Upper lobe of right lung (tissue), 1 donor: ENCODE measurements at regions of chr3 and their contacts with region 1.

Region 1: GRCh38 chr3:150183678-150184425 is 213.2 kb upstream of the PFN2 start:
- DNase-seq: peak; percentile 72
- ATAC-seq: peak; percentile 95
- H3K4me3 ChIP-seq: peak overlapping the region; percentile 43
- H3K27ac ChIP-seq: no peak overlapping the region
- H3K4me1 ChIP-seq: peaks cover 9% of the 10 kb centered on the region
- H3K27me3 ChIP-seq: no peaks in the 10 kb centered on the region
- CTCF ChIP-seq: peak; percentile 66

Region 2: GRCh38 chr3:149969940-149970715 is 213.7 kb before region 1 on chr3:
- intact Hi-C with region 1: loop called (anchors 10 kb)
- DNase-seq: peak; percentile 91
- ATAC-seq: peak; percentile 80
- H3K4me3 ChIP-seq: peak overlapping the region; percentile 73
- H3K27ac ChIP-seq: peak overlapping the region; percentile 64
- H3K4me1 ChIP-seq: peaks cover 16% of the 10 kb centered on the region
- H3K27me3 ChIP-seq: no peaks in the 10 kb centered on the region
- CTCF ChIP-seq: no peak

Region 3: DNA sequence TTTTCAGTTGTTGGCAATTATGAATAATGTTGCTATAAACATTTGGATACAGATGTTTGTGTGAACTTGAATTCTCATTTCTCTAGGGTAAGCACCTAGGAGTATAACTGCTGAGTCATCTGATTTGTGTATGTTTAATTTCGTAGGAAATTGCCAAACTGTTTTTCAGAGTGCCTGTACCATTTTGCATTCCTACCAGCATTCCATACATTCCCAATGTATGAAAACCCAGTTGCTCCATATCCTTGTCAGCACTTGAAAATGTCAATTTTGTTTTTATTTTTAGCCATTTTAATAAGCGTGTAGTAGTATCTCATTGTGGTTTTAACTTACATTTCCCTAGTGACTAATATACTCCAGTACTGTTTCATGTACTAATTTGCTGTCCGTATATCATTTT is 125.7 kb after region 1 on chr3:
- intact Hi-C with region 1: no loop called
- DNase-seq: no peak
- ATAC-seq: no peak
- H3K4me3 ChIP-seq: no peak overlapping the region
- H3K27ac ChIP-seq: no peak overlapping the region
- H3K4me1 ChIP-seq: no peaks in the 10 kb centered on the region
- H3K27me3 ChIP-seq: no peaks in the 10 kb centered on the region
- CTCF ChIP-seq: no peak